ENCODE measurements at regions of chr2 and their contacts with region 1.

Region 1: DNA sequence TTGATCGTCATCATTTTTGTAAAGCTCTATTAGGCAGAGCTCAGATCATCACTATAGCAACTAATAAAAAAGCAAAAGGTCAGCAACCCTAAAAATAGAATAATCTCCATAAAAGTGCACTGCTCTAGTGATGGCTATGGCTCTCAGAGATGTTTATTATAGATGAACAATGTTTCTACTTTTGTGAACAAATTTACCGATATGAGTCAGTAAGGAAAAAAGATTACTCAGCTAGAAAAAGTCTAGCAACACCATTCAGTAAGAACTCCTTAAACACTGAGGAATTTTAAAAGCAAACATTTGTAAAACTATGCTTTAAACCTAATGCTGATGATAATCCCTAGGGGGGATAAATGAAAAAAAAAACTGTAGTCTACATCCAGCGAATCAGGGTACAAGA is 69.6 kb downstream of the ACVR1C start:
- DNase-seq: no peak

Region 2: DNA sequence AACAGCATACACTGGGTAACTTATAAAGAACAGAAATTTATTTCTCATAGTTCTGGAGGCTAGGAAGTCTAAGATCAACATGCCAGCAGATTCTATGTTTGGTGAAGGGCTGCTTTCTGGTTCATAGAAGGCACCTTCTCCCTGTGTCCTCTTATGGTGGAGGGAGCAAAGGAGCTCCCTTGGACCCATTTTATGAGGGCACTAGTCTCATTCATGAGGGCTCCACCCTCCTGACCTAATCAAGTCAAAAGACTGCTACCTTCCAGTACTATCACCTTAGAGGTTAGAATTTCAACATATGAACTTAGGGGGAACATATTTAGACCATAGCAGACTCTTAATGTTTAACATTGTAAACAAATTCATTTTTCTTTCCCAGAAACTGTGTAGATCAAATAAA is 15.1 kb after region 1 on chr2:
- intact Hi-C with region 1: loop called (anchors 2 kb)
- DNase-seq: no peak

Measured in posterior cingulate gyrus (tissue), 11 donors.